Left colon (tissue), 2 donors: ENCODE measurements at regions of chr15 and their contacts with region 1.

Region 1: GRCh38 chr15:100873029-100873677 is 6.5 kb upstream of the ALDH1A3 start:
- DNase-seq: peak; percentile 48 to 74
- ATAC-seq: peak; percentile 92

Region 2: DNA sequence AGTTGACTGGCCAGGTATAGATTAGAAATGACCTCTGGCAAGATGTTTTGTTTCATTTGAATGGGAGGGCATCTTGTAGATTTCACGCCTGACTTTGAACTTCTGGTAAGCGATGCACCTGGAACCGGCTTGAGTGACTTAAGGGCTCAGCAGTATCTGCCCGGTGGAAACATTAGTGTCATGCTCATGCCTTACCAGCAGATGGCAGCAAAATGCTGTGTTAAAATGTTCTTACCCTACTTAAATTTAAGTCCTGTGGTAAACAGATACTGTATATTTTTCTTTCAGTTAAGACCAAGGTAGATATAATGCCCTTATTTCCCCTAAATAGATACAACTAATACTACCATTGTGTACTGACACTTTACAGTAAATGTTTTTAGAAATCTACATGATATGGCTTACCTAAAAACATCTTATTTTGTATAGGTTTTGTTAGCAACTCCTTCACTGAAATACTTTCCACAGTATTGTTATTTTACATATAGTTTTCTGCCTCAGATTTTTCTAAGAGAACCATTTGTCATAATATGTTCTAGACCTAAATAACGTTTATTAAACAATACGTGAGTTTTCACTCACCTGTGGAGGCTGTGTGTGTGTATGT is 245.3 kb before region 1 on chr15:
- intact Hi-C with region 1: loop called in 1 of 2 experiments (anchors 5 kb)
- DNase-seq: peak; percentile 40 to 54
- ATAC-seq: peak; percentile 92

Region 3: GRCh38 chr15:100671858-100672543 is 201.2 kb before region 1 on chr15:
- intact Hi-C with region 1: loop called in 1 of 2 experiments (anchors 5 kb)
- DNase-seq: no peak
- ATAC-seq: no peak